BJ (cell line): ENCODE measurements at regions of chr6 and their contacts with region 1.

Region 1: GRCh38 chr6:13574149-13574570 is 241 bp upstream of the SIRT5 start:
- DNase-seq: peak; percentile 52
- H3K4me3 ChIP-seq: peak overlapping the region; percentile 90
- H3K27me3 ChIP-seq: peaks cover 1% of the 10 kb centered on the region
- CTCF ChIP-seq: peak; percentile 37; the same call in 1 of the 2 replicates

Region 2: DNA sequence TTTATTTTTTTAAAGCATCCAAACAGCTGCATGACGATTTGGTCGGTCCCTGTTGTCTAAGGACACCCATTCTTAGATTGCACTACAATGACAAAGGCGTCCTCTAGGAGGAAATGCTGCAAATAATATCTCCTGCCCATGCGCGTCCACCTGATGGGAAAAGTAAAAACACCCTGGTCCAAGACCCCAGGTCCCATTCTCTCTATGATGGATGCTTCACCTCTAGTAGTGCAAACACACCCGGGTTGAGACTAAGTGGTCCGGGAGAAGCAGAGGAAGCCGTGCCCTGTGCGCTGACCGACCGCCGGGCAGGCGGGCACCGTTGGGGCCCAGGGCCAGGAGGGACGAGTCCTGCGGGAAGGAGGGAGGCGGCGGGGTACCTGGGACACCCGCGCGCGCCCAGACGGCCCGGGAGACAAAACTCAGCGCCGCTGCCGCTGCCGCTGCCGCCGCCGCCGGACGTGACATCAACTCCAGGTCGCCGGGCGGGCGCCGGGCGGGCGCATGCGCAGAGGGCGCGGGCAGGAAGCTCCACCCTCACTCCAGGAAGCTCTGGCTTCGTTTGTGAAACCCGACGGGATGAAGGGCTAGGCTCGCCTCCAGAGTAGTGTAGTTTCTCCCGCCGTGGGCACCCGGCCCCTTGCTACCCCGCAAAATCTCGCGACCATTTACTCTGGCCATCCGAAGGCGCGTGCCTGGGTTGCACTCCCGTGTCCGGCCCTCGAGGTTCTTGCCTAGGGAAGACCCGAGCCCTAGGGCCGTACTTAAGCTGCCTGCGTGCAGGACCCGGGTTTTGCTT is 245.9 kb before region 1 on chr6 and contains the start of gene TBC1D7:
- CTCF ChIA-PET with region 1: interaction called, 11 read pairs
- POLR2A ChIA-PET with region 1: no interaction called
- DNase-seq: peak; percentile 57
- H3K4me3 ChIP-seq: peak within 1 kb of the TSS; percentile 95
- H3K27me3 ChIP-seq: no peaks in the 10 kb centered on the region
- CTCF ChIP-seq: peak; percentile 26; the same call in 1 of the 2 replicates
- polyA plus RNA-seq, gene TBC1D7: 18.6 and 20.2 TPM in 2 replicates

Region 3: GRCh38 chr6:13336553-13336952 is 237.6 kb before region 1 on chr6:
- CTCF ChIA-PET with region 1: interaction called, 14 read pairs
- POLR2A ChIA-PET with region 1: no interaction called
- DNase-seq: peak; percentile 85
- H3K4me3 ChIP-seq: no peak overlapping the region
- H3K27me3 ChIP-seq: peaks cover 2% of the 10 kb centered on the region
- CTCF ChIP-seq: peak; percentile 86

Region 4: DNA sequence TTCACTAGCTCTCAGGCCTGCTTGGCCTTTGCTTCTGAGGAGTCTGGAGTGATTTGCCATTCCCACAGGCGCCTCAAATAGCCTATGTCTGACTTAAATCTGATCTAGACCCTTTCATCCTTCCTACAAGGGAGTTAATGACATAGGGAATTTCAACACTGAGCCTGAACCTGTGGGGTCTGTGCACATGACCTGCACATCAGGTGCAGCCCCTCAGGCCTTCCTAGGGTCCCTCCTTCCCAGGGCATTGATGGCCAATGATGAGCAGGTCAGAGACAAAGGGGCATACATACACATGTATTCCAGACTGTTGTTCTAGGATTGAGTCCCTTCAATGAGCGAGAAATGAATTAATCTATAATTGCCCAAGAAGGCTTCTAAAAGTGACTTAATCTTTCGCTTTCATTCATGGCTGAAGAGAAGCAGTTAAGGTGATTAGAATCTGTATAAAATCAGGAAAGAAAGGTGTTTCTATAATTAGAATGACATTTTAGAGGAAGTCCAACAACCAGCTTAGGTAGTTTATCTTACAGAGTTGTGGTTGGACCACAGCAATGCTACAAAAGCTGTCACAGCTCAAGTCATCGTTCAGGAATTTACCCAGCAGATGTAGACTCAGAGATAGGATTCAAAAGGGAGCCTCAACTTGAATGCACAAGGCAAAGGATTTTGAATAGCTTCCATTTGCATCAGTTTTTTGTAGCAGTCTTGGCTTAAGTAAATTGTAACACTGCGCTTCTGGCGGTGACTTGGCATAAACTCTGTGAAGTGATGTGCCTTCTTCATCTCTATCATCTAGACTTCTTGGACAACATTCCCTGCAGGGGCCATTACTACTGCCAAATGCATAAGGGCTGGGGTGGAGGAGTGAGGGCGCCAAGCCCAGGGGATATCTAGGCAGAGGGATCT is 218.9 kb before region 1 on chr6:
- CTCF ChIA-PET with region 1: interaction called, 10 read pairs
- POLR2A ChIA-PET with region 1: no interaction called
- DNase-seq: peak; percentile 91
- H3K4me3 ChIP-seq: no peak overlapping the region
- H3K27me3 ChIP-seq: no peaks in the 10 kb centered on the region
- CTCF ChIP-seq: no peak

Region 5: GRCh38 chr6:13561624-13562267 is 12.4 kb before region 1 on chr6:
- CTCF ChIA-PET with region 1: interaction called, 25 read pairs
- POLR2A ChIA-PET with region 1: no interaction called
- DNase-seq: no peak
- H3K4me3 ChIP-seq: no peak overlapping the region
- H3K27me3 ChIP-seq: peaks cover 3% of the 10 kb centered on the region; the same call in 1 of the 2 replicates
- CTCF ChIP-seq: no peak

Region 6: GRCh38 chr6:13593720-13594119 is 19.6 kb after region 1 on chr6:
- CTCF ChIA-PET with region 1: interaction called, 15 read pairs
- POLR2A ChIA-PET with region 1: no interaction called
- DNase-seq: no peak
- H3K4me3 ChIP-seq: no peak overlapping the region
- H3K27me3 ChIP-seq: no peaks in the 10 kb centered on the region
- CTCF ChIP-seq: no peak

Region 7: DNA sequence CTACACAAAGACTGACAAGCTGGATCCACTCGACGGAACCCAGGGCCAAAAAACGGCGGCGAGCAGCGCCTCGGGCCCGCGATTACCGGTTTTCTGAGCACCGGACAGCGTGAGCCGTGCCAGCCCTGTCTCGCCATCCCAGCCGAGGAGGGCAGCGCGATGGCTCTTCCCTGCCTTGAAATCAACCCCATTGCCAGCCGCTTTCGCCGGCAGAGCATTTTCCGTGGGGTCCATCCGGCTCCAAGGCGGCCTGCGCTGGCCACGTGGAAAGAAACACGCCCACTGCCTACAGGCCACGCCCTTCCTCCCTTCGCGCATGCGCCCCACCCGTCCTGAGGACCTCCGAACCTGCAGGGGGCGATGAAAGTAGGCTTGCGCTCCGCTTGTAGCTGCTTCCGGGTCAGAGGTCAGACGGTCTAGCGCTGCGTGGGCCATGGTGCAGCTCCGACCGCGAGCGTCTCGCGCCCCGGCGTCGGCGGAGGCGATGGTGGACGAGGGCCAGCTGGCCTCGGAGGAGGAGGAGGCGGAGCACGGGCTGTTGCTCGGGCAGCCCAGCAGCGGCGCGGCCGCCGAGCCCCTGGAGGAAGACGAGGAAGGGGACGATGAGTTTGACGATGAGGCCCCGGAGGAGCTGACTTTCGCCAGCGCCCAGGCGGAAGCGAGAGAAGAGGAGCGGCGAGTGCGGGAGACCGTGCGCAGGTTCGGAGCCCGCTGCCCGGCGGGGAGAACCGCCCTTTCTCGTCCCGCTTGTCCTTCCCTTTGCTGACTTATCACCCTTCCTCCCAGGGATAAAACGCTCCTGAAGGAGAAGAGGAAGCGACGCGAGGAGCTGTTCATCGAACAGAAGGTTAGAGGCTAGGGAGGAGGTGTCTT is 41.0 kb after region 1 on chr6 and contains the start of gene NOL7:
- CTCF ChIA-PET with region 1: interaction called, 11 read pairs
- POLR2A ChIA-PET with region 1: no interaction called
- DNase-seq: peak; percentile 80
- H3K4me3 ChIP-seq: peak within 1 kb of the TSS; percentile 88
- H3K27me3 ChIP-seq: no peaks in the 10 kb centered on the region
- CTCF ChIP-seq: peak; percentile 96
- polyA plus RNA-seq, gene NOL7: 20.1 and 34.0 TPM in 2 replicates